Tibial artery (tissue), 4 donors: ENCODE measurements at regions of chr12 and their contacts with region 1.

Region 1: GRCh38 chr12:111419784-111420183 is 14.1 kb downstream of the SH2B3 start:
- DNase-seq: no peak
- H3K4me3 ChIP-seq: no peak overlapping the region
- H3K27ac ChIP-seq: no peak overlapping the region
- H3K4me1 ChIP-seq: peaks cover 0 to 12% (median 0%) of the 10 kb centered on the region in 4 donors
- H3K27me3 ChIP-seq: no peaks in the 10 kb centered on the region
- CTCF ChIP-seq: no peak

Region 2: DNA sequence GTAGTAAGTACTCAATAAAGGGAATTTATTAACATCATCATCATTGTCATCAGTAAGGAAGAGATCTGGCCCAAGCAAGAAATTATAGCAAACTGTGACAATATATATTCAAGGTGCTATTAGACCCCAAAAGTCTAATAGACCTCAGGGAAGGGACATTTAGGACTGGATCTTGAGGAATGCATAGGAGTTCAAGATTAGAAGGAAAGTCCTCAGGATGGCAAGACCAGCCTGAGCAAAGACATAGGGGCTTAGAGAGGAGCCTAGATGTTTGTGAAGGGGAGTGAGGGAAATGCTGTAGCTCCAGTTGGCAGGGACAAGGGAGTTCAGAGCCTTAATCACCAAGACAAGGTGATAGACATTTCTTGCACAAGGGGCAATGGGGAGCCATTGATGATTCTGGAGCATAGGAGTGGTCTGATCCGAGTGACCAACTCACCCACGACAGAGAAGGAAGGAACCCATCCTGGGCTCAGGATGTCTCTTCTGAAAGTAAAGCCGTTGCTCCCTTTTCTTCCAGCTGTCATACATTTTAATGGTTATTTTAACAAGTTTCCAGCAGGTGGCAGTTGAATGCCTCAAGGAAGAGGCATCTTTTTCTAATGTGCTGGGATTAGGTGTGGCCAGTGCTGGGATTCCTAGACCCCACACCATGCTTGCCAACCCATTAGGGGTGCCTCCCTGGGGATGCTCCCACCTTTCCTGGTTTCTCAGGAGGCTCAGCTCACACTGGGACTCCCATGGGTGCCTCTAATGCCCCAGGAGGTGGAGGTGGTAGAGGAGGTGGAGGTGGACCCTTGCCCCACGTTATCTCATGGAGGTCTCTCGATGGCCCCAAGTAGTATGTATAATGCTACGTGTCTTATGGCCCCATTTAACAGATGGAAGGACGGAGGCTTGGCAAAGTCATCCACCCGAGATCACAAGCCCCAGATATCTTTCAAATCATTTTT is 88.7 kb before region 1 on chr12:
- intact Hi-C with region 1: no loop called
- DNase-seq: no peak
- H3K4me3 ChIP-seq: no peak overlapping the region
- H3K27ac ChIP-seq: no peak overlapping the region
- H3K4me1 ChIP-seq: no peaks in the 10 kb centered on the region
- H3K27me3 ChIP-seq: peaks cover 0 to 19% of the 10 kb centered on the region in 2 donors
- CTCF ChIP-seq: peak; percentile 15 to 29

Region 3: DNA sequence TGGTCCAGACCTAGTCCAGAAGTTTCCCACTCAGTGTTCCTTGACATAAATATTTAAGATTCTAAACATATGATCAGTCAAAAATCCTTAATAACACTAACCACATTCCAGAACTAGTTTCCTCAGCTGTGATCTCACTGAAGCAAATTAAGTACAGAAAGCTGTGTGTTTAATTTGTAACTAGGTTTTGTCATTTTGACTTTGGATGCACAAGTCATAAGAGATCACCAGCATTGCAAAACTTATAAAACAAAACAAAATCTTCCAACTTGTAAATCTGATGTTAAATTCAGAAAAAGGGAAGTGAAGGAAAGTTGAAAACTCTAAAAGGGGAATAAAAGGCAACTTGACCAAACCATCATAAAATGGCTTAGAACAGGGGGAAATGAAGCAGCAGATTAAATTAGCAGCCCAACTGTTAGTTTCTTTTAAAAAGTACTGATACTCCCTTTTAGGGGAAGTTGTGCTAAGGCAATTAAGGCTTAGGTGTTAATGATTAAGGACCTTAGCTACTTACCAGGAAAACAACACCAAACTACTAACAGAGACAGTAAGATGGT is 42.5 kb after region 1 on chr12:
- intact Hi-C with region 1: loop called (anchors 2 kb)
- DNase-seq: no peak
- H3K4me3 ChIP-seq: no peak overlapping the region
- H3K27ac ChIP-seq: no peak overlapping the region
- H3K4me1 ChIP-seq: peaks cover 0 to 9% (median 0%) of the 10 kb centered on the region in 4 donors
- H3K27me3 ChIP-seq: no peaks in the 10 kb centered on the region
- CTCF ChIP-seq: no peak

Region 4: GRCh38 chr12:111812881-111813741 is 393.3 kb after region 1 on chr12:
- intact Hi-C with region 1: no loop called
- DNase-seq: peak; percentile 84 to 85
- H3K4me3 ChIP-seq: no peak overlapping the region
- H3K27ac ChIP-seq: no peak overlapping the region
- H3K4me1 ChIP-seq: no peaks in the 10 kb centered on the region
- H3K27me3 ChIP-seq: no peaks in the 10 kb centered on the region
- CTCF ChIP-seq: peak; percentile 79 to 88

Region 5: DNA sequence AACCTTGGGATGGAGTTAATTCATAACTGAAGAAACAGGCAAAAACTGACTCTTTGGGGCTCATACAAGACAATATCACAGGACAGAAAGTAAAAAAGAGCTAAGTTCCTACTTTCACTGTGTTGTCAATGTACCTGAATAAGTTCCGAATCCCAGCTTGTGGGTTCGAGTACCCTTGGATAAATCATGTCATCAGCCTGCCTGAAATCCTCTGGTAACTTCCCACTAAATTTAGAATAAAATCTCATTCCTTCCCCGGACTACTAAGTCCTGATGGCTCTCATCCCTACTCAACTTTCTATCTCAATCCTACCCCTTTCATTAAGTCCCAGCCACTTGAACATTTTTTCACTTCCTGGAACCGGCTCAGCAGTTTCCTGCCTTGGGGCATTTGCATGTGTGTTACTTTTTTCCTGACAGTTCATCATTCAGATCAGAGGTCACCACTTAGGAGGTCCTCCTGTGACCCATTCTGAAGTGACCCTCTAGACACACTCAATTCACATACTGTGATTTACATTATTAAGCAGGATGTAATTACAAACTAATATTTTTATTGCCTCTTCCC is 606.1 kb after region 1 on chr12:
- intact Hi-C with region 1: no loop called
- DNase-seq: no peak
- H3K4me3 ChIP-seq: no peak overlapping the region
- H3K27ac ChIP-seq: no peak overlapping the region
- H3K4me1 ChIP-seq: no peaks in the 10 kb centered on the region
- H3K27me3 ChIP-seq: no peaks in the 10 kb centered on the region
- CTCF ChIP-seq: no peak

Region 6: GRCh38 chr12:113184900-113185773 is 1765.4 kb after region 1 on chr12 and contains the starts of genes DDX54 and RITA1:
- intact Hi-C with region 1: no loop called
- DNase-seq: peak; percentile 89 to 93
- H3K4me3 ChIP-seq: peak within 1 kb of the TSS; percentile 87 to 96
- H3K27ac ChIP-seq: peak within 1 kb of the TSS; percentile 97 to 98
- H3K4me1 ChIP-seq: peaks cover 0 to 33% (median 24%) of the 10 kb centered on the region in 4 donors
- H3K27me3 ChIP-seq: no peaks in the 10 kb centered on the region
- CTCF ChIP-seq: peak in 1 of 2 experiments; percentile 18